ENCODE measurements at regions of chr1 and their contacts with region 1.

Region 1: DNA sequence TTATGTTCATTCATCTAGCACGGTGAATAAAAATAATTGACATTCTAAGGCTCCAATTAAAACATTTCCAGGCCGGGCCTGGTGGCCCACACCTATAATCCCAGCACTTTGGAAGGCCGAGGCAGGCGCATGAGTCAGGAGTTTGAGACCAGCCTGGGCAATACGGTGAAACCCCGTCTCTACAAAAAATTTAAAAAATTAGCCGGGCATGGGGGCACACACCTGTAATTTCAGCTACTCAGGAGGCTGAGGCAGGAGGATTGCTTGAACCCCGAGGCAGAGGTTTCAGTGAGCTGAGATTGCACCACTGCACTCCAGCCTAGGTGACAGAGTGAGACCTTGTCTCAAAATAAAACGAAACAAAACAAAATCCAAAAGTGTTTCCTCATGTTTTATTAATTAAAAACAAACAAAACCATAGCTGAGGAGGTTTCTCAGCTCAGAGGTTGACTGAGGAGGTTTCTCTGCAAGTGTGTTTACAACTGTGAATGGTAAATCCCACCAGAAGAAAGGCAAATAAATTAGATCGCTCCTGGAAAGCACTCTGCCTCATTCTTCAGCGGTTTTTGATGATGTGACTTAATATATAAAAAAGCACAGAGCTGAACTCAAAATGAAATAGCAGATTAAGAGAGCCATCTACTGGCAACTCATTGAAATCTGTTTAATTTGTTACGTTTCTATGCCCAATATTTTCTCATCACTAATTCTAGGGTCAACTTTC is 37.7 kb upstream of the ATG4C start:
- DNase-seq: no peak
- ATAC-seq: peak; percentile 51
- H3K4me3 ChIP-seq: no peak overlapping the region
- H3K4me1 ChIP-seq: no peaks in the 10 kb centered on the region
- CTCF ChIP-seq: peak; percentile 18

Region 2: DNA sequence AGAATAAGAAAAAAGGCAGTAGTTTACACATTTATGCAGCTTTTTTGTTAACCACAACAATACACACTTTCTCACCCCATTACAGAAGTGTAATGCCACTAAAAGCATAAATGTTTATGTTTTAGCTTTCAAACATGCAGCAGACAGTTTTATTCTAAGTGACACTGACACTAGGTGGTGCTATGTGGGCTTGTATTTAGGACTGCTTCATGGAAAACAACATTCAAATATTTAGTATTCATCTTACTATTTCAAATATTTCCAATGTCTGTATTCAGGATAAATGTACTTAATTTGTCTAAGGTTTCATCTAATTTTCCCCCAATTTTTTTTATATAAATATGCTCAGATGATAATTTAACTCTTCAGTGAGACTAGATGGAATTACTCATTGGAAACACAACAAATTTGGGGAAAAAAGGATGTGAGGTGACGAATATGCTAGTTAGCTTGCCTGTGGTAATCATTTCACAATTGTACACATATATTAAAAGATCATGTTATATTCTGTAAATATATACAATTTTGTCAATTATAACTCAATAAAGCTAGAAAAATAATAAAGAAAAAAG is 238.0 kb before region 1 on chr1:
- intact Hi-C with region 1: loop called in 1 of 2 experiments (anchors 5 kb)
- DNase-seq: peak in 1 of 3 donors; percentile 68
- ATAC-seq: peak; percentile 46
- H3K4me3 ChIP-seq: no peak overlapping the region
- H3K4me1 ChIP-seq: no peaks in the 10 kb centered on the region
- CTCF ChIP-seq: no peak

Region 3: DNA sequence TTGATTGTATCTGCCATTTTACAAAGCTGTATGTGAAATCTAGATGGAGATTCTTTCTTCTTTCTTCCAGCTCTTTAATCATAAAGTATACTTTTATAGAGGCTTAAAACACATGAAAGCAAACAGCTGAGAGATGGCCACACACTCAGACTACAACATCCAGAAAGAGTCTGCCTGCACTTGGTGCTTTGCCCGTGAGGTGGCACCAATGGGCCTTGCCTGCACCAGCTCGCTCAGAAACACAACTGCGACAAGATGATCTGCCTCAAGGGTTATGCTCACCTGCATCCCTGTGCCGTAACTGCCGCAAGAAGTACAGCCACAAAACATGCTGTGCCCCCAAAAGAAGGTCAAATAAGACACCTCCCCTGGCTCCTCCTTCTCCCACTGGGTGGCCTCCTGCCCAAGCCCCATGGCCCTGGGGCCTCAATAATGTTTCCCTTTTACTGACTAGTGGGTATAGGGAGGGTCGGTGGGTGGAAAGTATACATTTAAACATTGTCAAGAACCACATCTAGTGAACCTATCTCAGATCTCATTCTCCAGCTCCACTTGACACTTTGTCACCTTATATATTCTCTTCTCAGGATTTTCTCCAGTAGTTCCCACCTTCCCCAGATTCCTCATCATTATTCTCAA is 215.6 kb before region 1 on chr1:
- intact Hi-C with region 1: loop called in 1 of 2 experiments (anchors 5 kb)
- DNase-seq: peak; percentile 38 to 65 (median 52)
- ATAC-seq: peak; percentile 89
- H3K4me3 ChIP-seq: no peak overlapping the region
- H3K4me1 ChIP-seq: no peaks in the 10 kb centered on the region
- CTCF ChIP-seq: peak; percentile 33

Region 4: DNA sequence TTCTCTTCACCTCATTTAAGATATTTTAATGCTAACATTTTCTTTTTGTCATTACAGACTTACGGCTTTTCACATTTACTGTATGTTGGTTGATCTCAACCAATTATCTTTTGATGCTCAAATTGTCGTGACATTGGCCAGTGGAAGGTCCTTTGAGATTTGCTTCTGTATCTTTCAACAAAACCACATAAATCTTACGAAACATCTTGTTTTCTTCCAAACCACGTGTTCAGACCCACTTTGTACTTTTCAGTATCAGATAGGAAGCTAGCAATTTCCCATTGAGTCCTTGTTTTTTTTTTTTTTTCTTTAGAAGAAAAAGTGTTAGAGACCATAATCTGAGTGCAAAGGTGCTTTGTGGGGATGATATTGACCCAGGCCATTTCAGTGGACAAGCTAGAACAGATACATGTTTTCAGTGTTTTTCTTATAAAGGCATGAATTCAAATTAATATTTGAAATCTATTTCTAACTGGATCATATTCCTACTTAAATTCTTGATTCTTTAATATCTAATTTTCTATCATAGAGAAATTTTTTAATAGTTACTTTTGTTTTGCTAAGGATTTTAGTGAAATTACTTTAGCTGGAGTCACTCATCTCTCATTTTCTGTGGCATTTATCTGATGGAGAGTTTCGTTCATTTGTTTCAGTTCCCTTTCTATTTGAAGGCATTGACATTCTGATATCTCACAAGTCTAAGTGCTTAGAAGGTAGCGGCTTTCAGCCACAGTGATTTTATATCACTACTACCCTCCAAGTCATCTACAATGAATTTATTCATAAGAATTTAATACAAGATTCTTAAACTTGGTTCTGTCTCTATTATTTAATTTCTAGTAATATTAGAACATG is 64.4 kb after region 1 on chr1:
- intact Hi-C with region 1: no loop called
- DNase-seq: no peak
- ATAC-seq: no peak
- H3K4me3 ChIP-seq: no peak overlapping the region
- H3K4me1 ChIP-seq: no peaks in the 10 kb centered on the region
- CTCF ChIP-seq: no peak

Measured in mucosa of descending colon (tissue), 3 donors.